ENCODE measurements at regions of chr16 and their contacts with region 1.

Region 1: GRCh38 chr16:69754469-69755310 is at the start of gene NOB1:
- DNase-seq: peak; percentile 97 to 99 (median 98)
- H3K4me3 ChIP-seq: peak within 1 kb of the TSS; percentile 73 to 88 (median 87)
- H3K4me3 Mint-ChIP-seq: peak within 1 kb of the TSS; percentile 99 to 100
- H3K27ac ChIP-seq: peak within 1 kb of the TSS; percentile 54 to 93
- H3K27ac Mint-ChIP-seq: peak within 1 kb of the TSS; percentile 90 to 98 (median 94)
- H3K4me1 ChIP-seq: peaks cover 13% of the 10 kb centered on the region in 2 donors
- H3K4me1 Mint-ChIP-seq: peaks cover 16% of the 10 kb centered on the region
- H3K27me3 ChIP-seq: no peaks in the 10 kb centered on the region
- H3K27me3 Mint-ChIP-seq: peaks cover 3 to 5% (median 3%) of the 10 kb centered on the region in 3 donors
- CTCF ChIP-seq: peak; percentile 96
- polyA plus RNA-seq, gene NOB1: 15.7 to 27.5 (median 18.0) TPM

Region 2: GRCh38 chr16:69396187-69397061 is 358.3 kb before region 1 on chr16:
- intact Hi-C with region 1: loop called in 1 of 2 experiments (anchors 10 kb)
- DNase-seq: peak; percentile 90 to 95 (median 95)
- H3K4me3 ChIP-seq: peak overlapping the region in 2 of 3 experiments; percentile 14 to 54
- H3K4me3 Mint-ChIP-seq: peak overlapping the region in 1 of 2 donors; percentile 71
- H3K27ac ChIP-seq: peak overlapping the region in 1 of 2 donors; percentile 71
- H3K27ac Mint-ChIP-seq: peak overlapping the region; percentile 59 to 87 (median 68)
- H3K4me1 ChIP-seq: peaks cover 22 to 25% of the 10 kb centered on the region in 2 donors
- H3K4me1 Mint-ChIP-seq: peaks cover 22% of the 10 kb centered on the region
- H3K27me3 ChIP-seq: peaks cover 14 to 30% of the 10 kb centered on the region in 2 donors
- H3K27me3 Mint-ChIP-seq: peaks cover 28 to 41% (median 34%) of the 10 kb centered on the region in 3 donors
- CTCF ChIP-seq: peak; percentile 9

Region 3: GRCh38 chr16:69709456-69710084 is 45.1 kb before region 1 on chr16:
- intact Hi-C with region 1: loop called (anchors 2 to 5 kb)
- DNase-seq: peak; percentile 39 to 67 (median 54)
- H3K4me3 ChIP-seq: no peak overlapping the region
- H3K4me3 Mint-ChIP-seq: no peak overlapping the region
- H3K27ac ChIP-seq: no peak overlapping the region
- H3K27ac Mint-ChIP-seq: no peak overlapping the region
- H3K4me1 ChIP-seq: no peaks in the 10 kb centered on the region
- H3K4me1 Mint-ChIP-seq: no peaks in the 10 kb centered on the region
- H3K27me3 ChIP-seq: no peaks in the 10 kb centered on the region
- H3K27me3 Mint-ChIP-seq: no peaks in the 10 kb centered on the region
- CTCF ChIP-seq: peak; percentile 80

Region 4: GRCh38 chr16:69726296-69727060 is 28.2 kb before region 1 on chr16 and contains the start of gene NQO1:
- intact Hi-C with region 1: no loop called
- DNase-seq: peak; percentile 65 to 80 (median 78)
- H3K4me3 ChIP-seq: peak within 1 kb of the TSS; percentile 50 to 88 (median 62)
- H3K4me3 Mint-ChIP-seq: peak within 1 kb of the TSS; percentile 91 to 98
- H3K27ac ChIP-seq: peak within 1 kb of the TSS; percentile 58 to 73
- H3K27ac Mint-ChIP-seq: peak within 1 kb of the TSS; percentile 85 to 95 (median 91)
- H3K4me1 ChIP-seq: peaks cover 23 to 31% of the 10 kb centered on the region in 2 donors
- H3K4me1 Mint-ChIP-seq: peaks cover 30% of the 10 kb centered on the region
- H3K27me3 ChIP-seq: no peaks in the 10 kb centered on the region
- H3K27me3 Mint-ChIP-seq: peaks cover 1 to 2% (median 1%) of the 10 kb centered on the region in 3 donors
- CTCF ChIP-seq: no peak
- polyA plus RNA-seq, gene NQO1: 0.51 to 3.9 (median 3.0) TPM